PC-9 (cell line): ENCODE measurements at regions of chr10 and their contacts with region 1.

Region 1: DNA sequence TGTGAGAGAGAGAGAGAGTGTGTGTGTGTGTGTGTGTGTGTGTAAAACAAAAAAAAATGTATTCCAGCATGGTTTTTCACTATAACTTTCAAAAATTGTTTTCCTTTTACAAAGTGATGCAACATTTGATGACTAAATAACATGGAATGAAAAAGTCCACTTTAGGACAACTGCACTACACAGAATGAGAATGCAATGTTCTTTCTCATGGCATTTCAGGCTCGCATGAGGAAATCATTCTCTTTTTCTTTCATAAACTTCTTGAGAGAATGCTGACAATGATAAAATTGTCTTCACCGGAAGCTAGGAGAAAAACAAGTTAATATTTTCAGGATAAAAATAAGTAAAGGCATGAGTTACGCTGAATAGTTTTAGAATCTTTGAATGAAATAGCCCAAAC is 53.7 kb downstream of the SLC16A12 start:
- DNase-seq: peak in 1 of 2 experiments; percentile 59
- H3K4me3 ChIP-seq: no peak overlapping the region
- H3K27ac ChIP-seq: peak overlapping the region; percentile 76
- H3K4me1 ChIP-seq: peaks cover 15% of the 10 kb centered on the region
- H3K27me3 ChIP-seq: no peaks in the 10 kb centered on the region
- CTCF ChIP-seq: no peak

Region 2: DNA sequence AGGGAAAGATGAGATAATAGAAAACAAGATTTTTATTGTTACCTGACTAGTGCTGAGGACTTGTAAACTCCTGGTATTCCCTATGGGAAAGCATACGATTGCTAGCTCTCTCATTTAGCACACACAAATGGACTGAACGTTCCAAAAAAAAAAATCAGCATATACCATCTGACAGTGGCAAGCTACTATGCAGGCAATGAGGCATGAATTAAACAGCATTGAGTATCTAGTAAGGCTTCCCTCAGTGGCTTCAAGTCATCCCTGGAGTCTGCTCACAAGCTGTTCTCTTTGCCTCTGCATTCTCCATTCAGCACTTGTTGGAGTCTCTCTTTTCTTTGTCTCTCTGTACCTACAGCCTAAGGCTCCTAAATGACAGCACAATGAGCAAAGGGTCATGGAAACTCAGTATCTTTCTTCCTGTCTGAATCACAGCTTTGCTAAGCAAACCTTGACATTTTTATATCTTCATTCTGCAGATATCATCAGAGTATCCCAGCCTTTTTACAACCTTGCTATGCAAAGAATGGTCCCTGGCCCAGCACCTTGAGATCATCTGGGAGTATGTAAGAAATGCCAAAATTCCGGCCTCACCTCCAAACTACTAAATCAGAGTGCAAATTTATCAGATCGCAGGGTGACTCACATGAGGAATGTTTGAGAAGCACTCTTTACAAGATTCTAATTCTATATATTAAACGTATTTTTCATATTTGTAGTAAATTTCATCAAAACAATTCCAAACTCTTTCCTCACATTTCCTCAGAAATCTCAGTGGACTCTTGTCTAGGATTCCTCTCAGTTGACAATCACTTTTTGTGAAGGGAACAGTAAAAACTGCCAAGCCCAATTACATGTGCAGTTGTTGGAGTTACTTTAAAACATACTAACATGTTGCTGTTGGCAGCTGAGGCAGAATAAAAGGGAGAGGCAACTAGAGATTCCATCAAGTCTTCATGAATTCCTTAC is 219.3 kb before region 1 on chr10:
- CTCF ChIA-PET with region 1: interaction called, 13 read pairs
- POLR2A ChIA-PET with region 1: no interaction called
- intact Hi-C with region 1: no loop called
- DNase-seq: peak; percentile 45 to 96
- H3K4me3 ChIP-seq: peak overlapping the region; percentile 20; the same call in 1 of the 2 replicates
- H3K27ac ChIP-seq: peak overlapping the region; percentile 95
- H3K4me1 ChIP-seq: peaks cover 43% of the 10 kb centered on the region
- H3K27me3 ChIP-seq: no peaks in the 10 kb centered on the region
- CTCF ChIP-seq: no peak

Region 3: GRCh38 chr10:89414146-89414878 is 67.3 kb before region 1 on chr10 and contains the start of gene IFIT5:
- CTCF ChIA-PET with region 1: no interaction called
- POLR2A ChIA-PET with region 1: interaction called, 15 read pairs
- intact Hi-C with region 1: no loop called
- DNase-seq: peak in 1 of 2 experiments; percentile 47
- H3K4me3 ChIP-seq: peak within 1 kb of the TSS; percentile 90
- H3K27ac ChIP-seq: peak within 1 kb of the TSS; percentile 83
- H3K4me1 ChIP-seq: peaks cover 8% of the 10 kb centered on the region; the same call in 1 of the 2 replicates
- H3K27me3 ChIP-seq: no peaks in the 10 kb centered on the region
- CTCF ChIP-seq: no peak
- total RNA-seq, gene IFIT5: 1.9 and 2.1 TPM in 2 replicates

Region 4: GRCh38 chr10:89516149-89516832 is 34.6 kb after region 1 on chr10:
- CTCF ChIA-PET with region 1: no interaction called
- POLR2A ChIA-PET with region 1: no interaction called
- intact Hi-C with region 1: loop called (anchors 5 kb)
- DNase-seq: peak in 1 of 2 experiments; percentile 55
- H3K4me3 ChIP-seq: no peak overlapping the region
- H3K27ac ChIP-seq: no peak overlapping the region
- H3K4me1 ChIP-seq: no peaks in the 10 kb centered on the region
- H3K27me3 ChIP-seq: no peaks in the 10 kb centered on the region
- CTCF ChIP-seq: no peak